Activated CD4-positive, alpha-beta T cell treated with anti-CD3 and anti-CD28 coated beads for 36 hours (primary cell): ENCODE measurements at regions of chr5 and their contacts with region 1.

Region 1: DNA sequence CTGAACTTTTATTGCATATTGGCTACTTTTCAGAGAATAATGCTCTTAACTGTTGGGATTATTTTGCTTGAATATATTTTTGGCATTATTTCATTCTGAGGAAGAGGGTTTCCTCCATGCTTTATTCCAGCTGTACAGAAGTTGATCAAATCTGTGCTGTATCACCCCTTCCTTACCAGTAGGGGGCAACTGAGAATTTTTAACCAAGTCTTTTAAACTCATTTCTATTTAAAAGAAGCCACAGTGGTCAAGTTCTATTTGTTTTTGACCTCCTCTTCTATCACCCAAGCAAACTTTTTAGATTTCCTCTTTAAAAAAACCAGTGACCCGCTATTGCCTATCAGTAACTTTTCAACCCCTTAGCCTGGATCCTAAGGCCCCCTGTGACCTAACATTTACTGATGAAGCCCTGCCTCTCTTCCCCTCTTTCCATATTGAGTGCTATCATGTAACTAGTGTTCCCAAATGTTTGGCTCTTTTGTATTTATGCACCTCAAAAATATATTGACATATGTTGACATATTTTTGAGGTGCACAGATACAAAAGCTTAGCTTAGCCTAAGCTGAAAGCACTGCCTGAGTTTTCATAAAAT is 80.6 kb downstream of the FBXO4 start:
- DNase-seq: no peak
- ATAC-seq: no peak
- H3K4me3 Mint-ChIP-seq: no peak overlapping the region
- H3K27ac Mint-ChIP-seq: no peak overlapping the region
- H3K4me1 Mint-ChIP-seq: no peaks in the 10 kb centered on the region
- H3K27me3 Mint-ChIP-seq: peaks cover 3% of the 10 kb centered on the region

Region 2: GRCh38 chr5:41985945-41986344 is 19.7 kb before region 1 on chr5:
- CTCF ChIA-PET with region 1: interaction called, 10 read pairs
- POLR2A ChIA-PET with region 1: no interaction called
- intact Hi-C with region 1: no loop called
- DNase-seq: no peak
- ATAC-seq: no peak
- H3K4me3 Mint-ChIP-seq: no peak overlapping the region
- H3K27ac Mint-ChIP-seq: no peak overlapping the region
- H3K4me1 Mint-ChIP-seq: no peaks in the 10 kb centered on the region
- H3K27me3 Mint-ChIP-seq: peaks cover 22% of the 10 kb centered on the region